ENCODE measurements at regions of chr7 and their contacts with region 1.

Region 1: DNA sequence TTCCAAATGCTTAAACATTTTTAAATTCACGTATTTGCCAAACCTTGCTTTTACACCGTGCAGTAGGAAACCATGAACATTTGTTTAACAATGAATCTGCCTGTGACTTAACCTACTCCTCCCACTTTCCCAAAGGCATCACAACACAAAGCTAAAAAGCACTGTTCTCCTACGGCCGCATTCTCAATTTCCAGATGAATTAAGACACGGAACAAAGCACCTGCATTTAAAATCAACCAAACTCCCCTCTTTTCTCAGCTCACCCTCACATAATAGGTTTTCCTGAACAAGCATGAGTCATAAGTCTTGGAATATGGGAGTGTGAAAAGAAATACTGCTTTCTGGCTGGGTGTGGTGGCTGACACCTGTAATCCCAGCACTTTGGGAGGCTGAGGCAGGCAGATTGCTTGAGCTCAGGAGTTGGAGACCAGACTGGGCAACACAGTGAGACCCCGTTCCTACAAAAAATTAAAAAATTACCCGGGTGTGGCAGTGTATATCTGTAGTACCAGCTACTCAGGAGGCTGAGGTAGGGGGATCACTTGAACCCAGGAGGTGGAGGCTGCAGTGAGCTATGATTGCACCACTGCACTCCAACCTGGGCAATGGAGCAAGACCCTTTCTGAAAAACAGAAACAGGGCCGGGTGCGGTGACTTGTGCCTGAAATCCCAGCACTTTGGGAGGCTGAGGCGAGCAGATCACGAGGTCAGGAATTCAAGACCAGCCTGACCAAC is 51.7 kb upstream of the CYTH3 start:
- DNase-seq: no peak
- ATAC-seq: no peak

Region 2: DNA sequence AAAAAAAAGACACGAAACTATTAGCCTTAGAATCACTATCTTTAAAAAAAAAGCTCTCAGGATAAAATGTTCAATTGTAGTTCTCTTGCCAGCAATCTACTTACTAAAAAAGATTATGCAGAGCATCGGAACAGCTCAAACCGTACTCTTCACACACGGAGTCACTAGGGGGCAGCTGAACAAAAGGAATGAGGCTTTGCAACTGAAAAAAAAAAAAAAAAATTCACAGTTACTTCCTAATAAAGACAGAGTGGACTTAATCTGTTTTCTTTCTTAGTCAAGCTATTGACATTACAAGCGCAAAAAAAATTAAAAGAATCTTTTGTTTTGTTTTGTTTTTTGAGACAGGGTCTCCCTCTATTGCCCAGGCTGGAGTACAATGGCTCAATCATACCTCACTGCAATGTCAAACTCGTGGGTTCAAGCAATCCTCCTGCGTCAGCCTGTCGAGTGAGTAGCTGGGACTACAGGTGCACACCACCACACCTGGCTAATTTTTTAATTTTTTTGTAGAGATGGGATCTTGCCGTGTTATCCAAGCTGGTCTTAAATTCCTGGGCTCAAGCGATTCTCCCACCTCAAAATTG is 326.8 kb before region 1 on chr7:
- intact Hi-C with region 1: loop called (anchors 1 kb)
- DNase-seq: no peak
- ATAC-seq: peak; percentile 50

Region 3: GRCh38 chr7:6160191-6160623 is 163.9 kb before region 1 on chr7:
- intact Hi-C with region 1: loop called (anchors 1 kb)
- DNase-seq: no peak
- ATAC-seq: peak; percentile 71

Region 4: DNA sequence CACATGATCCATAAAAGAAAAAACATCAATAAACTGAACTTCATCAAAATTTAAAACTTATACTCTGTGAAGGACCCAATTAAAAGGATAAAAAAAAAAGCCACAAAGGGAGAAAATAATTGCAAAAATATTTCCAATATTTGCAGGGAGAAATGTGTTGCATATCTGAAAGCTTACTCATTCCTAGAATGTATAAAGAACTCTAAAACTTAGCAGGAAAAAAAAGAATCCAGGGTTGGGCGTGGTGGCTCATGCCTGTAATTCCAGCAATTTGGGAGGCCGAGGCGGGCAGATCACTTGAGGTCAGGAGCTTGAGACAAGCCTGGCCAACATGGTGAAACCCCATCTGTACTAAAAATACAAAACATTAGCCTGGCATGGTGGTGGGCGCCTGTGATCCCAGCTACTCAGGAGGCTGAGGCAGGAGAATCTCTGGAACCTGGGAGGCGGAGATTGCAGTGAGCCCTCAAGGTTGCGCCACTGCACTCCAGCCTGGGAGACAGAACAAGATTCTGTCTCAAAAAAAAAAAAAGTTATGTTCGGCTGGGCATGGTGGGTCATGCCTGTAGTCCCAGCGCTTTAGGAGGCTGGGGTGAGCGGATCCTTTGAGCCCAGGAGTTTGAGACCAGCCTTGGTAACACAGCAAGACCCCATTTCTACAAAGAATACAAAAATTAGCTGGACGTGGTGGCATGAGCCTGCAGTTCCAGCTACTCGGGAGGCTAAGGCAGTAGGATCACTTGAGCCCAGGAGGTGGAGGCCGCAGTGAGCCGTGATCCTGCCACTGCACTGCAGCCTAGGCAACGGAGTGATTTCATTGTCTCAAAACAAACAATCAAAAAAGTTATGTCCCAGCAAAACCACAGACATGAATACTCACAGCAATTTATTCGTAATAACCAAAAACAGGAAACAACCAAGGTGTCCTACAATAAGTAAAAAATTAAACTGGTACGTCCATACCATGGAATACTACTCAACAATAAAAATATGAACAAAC is 40.4 kb before region 1 on chr7:
- intact Hi-C with region 1: no loop called
- DNase-seq: no peak
- ATAC-seq: no peak